ENCODE measurements at regions of chr9 and their contacts with region 1.

Region 1: DNA sequence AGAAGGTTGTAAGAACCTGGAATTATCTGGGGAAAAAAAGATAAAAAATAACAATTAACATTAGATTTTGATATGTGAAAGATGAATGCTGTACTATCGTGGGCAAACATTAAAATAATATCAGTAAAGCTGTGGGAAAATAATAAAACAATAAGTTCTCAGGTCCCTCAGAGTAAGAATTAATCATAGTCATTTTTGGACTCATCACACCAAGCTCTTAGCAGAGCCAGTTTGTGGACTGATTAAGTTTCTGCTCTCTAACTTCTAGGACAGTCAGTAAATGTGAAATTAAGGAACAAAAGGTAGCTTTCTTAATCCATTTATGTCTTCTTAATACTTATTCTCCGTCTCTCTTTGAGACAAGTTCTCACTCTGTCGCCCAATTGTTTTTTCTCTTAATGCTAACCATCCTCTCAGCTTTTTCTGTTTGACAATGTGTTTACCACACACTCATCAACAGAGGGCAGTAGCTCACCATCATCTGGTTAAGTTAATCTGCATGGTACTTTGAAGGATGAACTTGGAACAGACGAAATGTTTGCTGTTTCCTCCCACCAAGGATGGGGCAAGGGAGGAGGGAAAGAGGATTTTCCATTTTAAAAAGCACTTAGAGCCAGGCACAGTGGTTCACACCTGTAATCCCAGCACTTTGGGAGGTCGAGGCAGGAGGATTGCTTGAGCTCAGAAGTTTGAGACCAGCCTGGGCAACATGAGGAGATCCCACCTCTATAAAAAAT is 5.3 kb upstream of the ACO1 start:
- DNase-seq: peak in 1 of 3 donors; percentile 40
- ATAC-seq: peak; percentile 86
- H3K4me3 ChIP-seq: no peak overlapping the region
- H3K4me1 ChIP-seq: peaks cover 5% of the 10 kb centered on the region
- CTCF ChIP-seq: peak; percentile 54

Region 2: GRCh38 chr9:32526041-32526706 is 147.0 kb after region 1 on chr9 and contains the start of gene RIGI:
- intact Hi-C with region 1: loop called in 1 of 2 experiments (anchors 10 kb)
- DNase-seq: peak; percentile 94 to 98 (median 95)
- ATAC-seq: peak; percentile 95
- H3K4me3 ChIP-seq: peak within 1 kb of the TSS; percentile 22
- H3K4me1 ChIP-seq: peaks cover 4% of the 10 kb centered on the region
- CTCF ChIP-seq: peak; percentile 13
- total RNA-seq, gene RIGI: 13.4 to 20.9 (median 14.2) TPM

Region 3: DNA sequence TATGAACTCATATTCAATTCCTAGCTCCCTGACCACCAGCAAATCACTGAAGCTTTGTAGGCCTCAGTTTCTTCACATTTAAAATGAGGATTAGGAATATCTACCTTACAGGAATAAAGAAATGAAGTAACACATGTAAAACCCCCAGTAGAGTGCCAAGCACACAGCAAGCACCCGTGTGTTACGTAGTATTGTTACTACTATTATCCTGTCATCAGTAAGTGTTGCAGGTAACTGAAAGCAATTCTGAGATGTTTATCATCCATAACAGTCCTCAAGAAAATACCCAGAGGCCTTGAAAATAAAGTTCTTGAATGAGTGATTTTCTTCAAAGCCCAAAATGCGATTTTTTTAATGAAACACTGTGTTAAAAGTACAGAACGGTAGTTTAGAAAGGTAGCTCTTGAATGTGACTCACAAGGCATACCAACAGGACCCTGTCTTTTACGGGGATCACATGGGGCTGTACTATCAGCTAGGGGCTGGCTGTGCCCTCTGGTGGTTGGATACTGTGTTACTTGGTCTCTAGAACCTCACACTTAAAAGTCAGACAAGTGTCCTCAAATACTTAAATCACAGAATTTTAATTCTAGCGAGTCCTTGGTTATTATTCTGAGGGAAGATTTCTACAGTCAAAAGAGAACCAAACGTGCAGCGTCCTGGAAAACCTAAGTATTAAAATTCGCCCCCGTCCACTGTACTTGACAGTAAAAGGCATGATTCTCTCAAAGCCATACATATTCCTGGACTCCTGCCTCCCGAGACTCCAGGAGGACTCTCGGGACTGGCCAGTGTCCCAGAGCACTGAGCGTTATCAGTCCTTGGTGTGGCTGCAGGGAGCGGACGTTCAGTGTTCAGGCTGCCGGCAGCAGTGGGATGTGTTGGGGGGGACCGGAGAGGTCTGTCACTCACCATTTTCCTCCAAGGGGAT is 193.1 kb after region 1 on chr9:
- intact Hi-C with region 1: loop called (anchors 5 kb)
- DNase-seq: peak; percentile 49 to 86 (median 61)
- ATAC-seq: peak; percentile 91
- H3K4me3 ChIP-seq: peak overlapping the region; percentile 87
- H3K4me1 ChIP-seq: peaks cover 16% of the 10 kb centered on the region
- CTCF ChIP-seq: peak; percentile 19

Region 4: DNA sequence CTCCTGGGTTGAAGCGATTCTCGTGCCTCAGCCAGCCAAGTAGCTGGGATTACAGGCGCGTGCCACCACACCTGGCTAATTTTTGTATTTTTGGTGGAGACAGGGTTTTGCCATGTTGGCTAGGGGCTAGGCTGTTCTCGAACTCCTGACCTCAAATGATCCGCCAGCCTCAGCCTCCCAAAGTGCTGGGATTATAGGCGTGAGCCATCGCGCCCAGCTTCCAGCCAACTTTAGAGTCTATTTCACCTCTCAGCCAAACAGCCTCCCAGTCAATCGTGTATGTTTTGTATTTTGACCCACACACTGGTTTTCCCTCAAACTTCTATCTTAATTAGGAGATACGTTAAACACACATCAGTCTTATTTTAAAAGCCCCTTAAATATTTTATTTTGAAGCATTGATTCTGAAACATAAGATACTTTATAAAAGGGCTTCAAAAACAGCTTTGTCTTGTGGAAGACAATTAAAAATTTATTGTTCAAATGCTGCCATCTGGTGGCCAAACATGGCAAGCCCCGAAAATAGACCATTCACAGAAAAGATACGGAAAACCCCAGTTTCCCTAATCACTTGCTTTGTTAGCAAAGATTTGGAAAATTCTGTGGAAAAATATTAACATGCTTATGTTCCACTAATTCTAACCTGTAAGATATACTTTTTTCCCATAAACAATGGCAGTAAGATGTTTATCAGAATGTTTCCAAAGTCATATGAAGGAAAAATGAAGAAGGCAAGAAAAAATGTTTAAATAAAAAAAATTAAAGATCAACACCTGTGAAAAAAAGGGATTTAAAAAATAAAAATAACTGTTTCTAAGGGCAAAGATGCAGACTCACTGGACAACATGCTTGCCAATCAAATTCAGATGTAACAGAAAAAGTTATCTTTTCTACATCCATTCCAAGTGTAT is 589.2 kb after region 1 on chr9:
- intact Hi-C with region 1: loop called in 1 of 2 experiments (anchors 10 kb)
- DNase-seq: peak in 2 of 3 donors; percentile 49 to 79
- ATAC-seq: no peak
- H3K4me3 ChIP-seq: no peak overlapping the region
- H3K4me1 ChIP-seq: no peaks in the 10 kb centered on the region
- CTCF ChIP-seq: peak; percentile 49

Measured in mucosa of descending colon (tissue), 3 donors.